HEK293 (cell line): ENCODE measurements at regions of chr6 and their contacts with region 1.

Region 1: DNA sequence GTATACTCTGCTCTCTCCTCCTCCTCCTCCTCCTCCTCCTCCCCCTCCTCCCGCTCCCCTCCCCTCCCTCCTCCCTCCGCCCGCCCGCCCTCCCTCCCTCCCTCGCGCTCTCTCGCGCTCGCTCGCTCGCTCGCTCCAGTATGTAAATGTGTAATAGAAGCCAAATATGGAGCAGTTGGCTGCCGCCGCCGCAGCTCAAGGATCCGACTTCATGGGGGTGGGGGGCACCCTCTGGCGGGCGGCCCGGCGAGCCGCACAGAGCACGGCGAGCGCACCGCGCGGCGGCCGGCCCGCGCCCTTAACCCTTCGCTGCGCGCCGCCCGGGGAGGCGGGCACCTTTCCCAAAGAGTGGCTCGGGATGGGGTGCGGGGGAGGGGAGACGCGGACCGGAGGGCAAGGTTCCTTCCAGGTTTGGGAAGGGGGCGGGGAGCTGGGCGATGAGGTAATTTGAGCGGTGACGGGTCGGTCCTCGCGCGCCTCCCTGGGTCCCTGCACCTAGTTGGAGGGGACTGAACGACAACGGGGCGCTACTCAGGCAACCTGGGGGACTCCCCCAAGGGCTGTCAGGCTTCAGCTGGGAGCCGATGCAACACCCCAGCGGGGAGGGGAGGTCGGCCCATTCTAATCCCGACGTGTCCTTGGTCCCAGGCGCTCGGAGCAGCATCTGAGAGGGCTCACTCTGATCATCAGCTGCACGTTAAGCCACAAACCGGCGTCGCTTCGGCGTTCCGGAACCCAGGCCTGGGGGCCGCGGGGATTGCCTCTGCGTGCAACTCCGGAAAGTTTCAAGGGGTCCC is 409 bp upstream of the ATXN1 start:
- H3K4me3 ChIP-seq: peak overlapping the region; percentile 76
- H3K27ac ChIP-seq: peak overlapping the region; percentile 100
- H3K4me1 ChIP-seq: peaks cover 43% of the 10 kb centered on the region
- CTCF ChIP-seq: peak; percentile 65; the same call in 1 of the 2 replicates

Region 2: GRCh38 chr6:16332175-16332542 is 429.5 kb before region 1 on chr6:
- CTCF ChIA-PET with region 1: interaction called, 35 read pairs
- POLR2A ChIA-PET with region 1: interaction called, 3 read pairs
- H3K4me3 ChIP-seq: no peak overlapping the region
- H3K27ac ChIP-seq: no peak overlapping the region
- H3K4me1 ChIP-seq: no peaks in the 10 kb centered on the region
- CTCF ChIP-seq: peak; percentile 76

Region 3: DNA sequence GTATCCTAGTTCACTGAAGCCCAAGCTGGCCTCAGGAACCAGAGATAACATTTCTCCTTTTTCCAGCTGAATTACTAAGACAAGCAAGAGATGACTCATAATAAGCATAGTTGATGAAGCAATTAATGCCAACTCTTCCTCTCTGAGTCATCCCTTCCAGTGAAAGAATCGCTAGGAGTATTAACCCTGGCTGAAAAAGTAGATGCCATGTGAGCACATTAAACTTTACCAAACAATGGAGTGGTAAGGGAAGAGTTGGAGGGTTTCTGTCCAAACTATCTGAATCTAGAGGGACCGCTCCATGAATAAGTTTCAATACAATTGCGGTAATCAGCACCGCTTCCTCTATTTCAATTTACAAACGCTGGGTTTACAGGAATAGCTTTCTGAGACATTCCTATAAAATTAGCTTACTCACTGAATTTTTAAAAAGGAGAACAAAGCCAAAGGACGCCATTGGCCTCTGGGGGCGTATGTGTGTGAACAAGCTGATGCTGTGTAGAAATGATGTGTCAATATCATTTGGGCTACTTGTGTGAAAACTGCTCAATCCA is 48.7 kb before region 1 on chr6:
- CTCF ChIA-PET with region 1: interaction called, 66 read pairs
- POLR2A ChIA-PET with region 1: interaction called, 14 read pairs
- H3K4me3 ChIP-seq: peak overlapping the region; percentile 29
- H3K27ac ChIP-seq: peak overlapping the region; percentile 91
- H3K4me1 ChIP-seq: peaks cover 35% of the 10 kb centered on the region
- CTCF ChIP-seq: 0 out of 2 replicates have a peak, but pooled peaks have one; percentile 28

Region 4: DNA sequence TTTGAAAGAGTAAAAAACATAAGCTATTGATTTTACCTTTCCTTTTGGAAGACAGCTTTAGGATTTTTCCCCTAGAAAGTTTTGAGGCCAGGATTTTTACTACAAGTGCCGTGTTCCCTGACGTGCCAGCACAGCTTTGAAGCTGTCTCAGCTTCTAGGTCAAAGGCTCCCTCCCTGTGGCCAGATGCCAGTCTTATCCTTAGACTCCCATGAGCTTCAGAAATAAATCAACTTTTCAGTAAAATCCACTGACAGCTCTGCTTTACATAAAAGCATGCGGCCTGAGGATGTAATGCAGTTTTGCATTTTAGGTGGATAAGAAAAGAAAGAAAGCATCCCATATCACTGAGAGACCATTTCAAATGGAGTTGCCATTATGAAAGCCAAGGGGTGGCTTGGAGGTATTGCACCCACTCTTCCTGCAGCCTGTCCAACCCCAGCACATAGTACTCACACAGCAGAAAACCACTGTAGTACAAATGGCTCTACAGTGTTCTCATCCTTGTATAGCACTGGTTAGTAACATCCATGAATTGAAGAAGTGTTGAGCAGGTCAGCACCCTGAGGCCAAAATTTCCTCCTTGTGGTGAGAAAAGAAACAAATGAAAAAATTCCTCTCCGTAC is 14.8 kb after region 1 on chr6:
- CTCF ChIA-PET with region 1: interaction called, 39 read pairs
- POLR2A ChIA-PET with region 1: interaction called, 3 read pairs
- H3K4me3 ChIP-seq: no peak overlapping the region
- H3K27ac ChIP-seq: no peak overlapping the region
- H3K4me1 ChIP-seq: peaks cover 9% of the 10 kb centered on the region; the same call in 1 of the 2 replicates
- CTCF ChIP-seq: 0 out of 2 replicates have a peak, but pooled peaks have one; percentile 14

Region 5: DNA sequence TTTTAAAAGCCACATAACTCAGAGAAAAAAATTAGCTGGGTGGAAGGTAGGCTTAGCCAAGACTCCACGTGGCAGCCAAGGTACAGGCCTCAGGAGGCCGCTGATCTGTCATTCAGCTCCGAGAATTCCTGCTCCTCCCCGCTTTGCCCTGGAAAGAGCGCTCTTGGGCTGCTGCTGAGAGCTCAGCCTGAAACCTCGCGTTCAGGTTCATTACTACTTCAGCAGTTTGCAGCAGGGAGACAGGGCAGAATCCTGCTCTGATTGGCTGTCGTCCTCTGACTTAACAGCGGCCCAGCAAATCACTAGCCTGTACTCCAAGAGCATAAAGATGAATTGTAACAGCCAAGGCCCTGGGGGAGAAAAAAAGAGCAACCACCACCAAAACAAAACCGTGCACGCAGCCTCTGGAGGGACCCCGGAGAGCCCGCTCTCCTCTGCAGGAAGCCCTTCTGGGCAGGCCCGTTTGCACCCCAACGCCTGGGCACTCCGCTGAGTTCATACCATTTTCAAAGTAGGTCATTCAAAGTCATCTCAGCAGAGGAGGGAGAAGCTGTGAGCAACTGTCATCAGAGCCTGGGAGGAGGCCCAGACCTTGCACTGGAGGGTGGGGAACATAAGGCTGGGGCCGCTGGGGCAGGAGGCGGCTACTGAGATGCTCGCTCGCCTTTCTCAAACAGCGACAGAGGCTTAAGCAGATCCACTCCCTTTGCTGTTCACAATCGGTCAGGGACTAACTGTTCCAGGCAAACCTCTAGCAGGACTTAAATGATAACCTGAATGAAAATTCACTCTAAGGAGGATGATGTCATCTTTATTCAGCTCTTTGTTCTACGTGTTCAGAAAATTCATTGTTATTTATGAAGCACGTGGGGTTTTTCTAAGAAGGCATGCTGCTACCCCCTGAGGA is 41.9 kb after region 1 on chr6:
- CTCF ChIA-PET with region 1: interaction called, 12 read pairs
- POLR2A ChIA-PET with region 1: no interaction called
- H3K4me3 ChIP-seq: no peak overlapping the region
- H3K27ac ChIP-seq: no peak overlapping the region
- H3K4me1 ChIP-seq: peaks cover 21% of the 10 kb centered on the region
- CTCF ChIP-seq: no peak

Region 6: GRCh38 chr6:16999491-17000436 is 238.1 kb after region 1 on chr6:
- CTCF ChIA-PET with region 1: interaction called, 10 read pairs
- POLR2A ChIA-PET with region 1: no interaction called
- H3K4me3 ChIP-seq: no peak overlapping the region
- H3K27ac ChIP-seq: no peak overlapping the region
- H3K4me1 ChIP-seq: 0 out of 2 replicates have a peak, but pooled peaks cover 3% of the 10 kb centered on the region
- CTCF ChIP-seq: no peak